ENCODE measurements at regions of chr16 and their contacts with region 1.

Region 1: GRCh38 chr16:8936421-8936820 is 27.3 kb downstream of the USP7 start:
- DNase-seq: peak; percentile 92
- H3K4me3 Mint-ChIP-seq: no peak overlapping the region
- H3K27ac Mint-ChIP-seq: peak overlapping the region; percentile 73
- H3K4me1 Mint-ChIP-seq: peaks cover 81% of the 10 kb centered on the region
- H3K27me3 Mint-ChIP-seq: no peaks in the 10 kb centered on the region

Region 2: GRCh38 chr16:8611886-8612600 is 324.4 kb before region 1 on chr16:
- CTCF ChIA-PET with region 1: no interaction called
- intact Hi-C with region 1: no loop called
- DNase-seq: no peak
- H3K4me3 Mint-ChIP-seq: no peak overlapping the region
- H3K27ac Mint-ChIP-seq: no peak overlapping the region
- H3K4me1 Mint-ChIP-seq: no peaks in the 10 kb centered on the region
- H3K27me3 Mint-ChIP-seq: peaks cover 11% of the 10 kb centered on the region

Region 3: GRCh38 chr16:8868416-8869211 is 67.8 kb before region 1 on chr16 and contains the start of gene CARHSP1:
- CTCF ChIA-PET with region 1: interaction called, 4 read pairs
- intact Hi-C with region 1: loop called (anchors 2 kb)
- DNase-seq: peak; percentile 81
- H3K4me3 Mint-ChIP-seq: peak within 1 kb of the TSS; percentile 89
- H3K27ac Mint-ChIP-seq: peak within 1 kb of the TSS; percentile 83
- H3K4me1 Mint-ChIP-seq: peaks cover 36% of the 10 kb centered on the region
- H3K27me3 Mint-ChIP-seq: no peaks in the 10 kb centered on the region
- total RNA-seq, gene CARHSP1: 46.5 to 49.6 TPM

Region 4: GRCh38 chr16:8910811-8911210 is 25.6 kb before region 1 on chr16:
- CTCF ChIA-PET with region 1: interaction called, 14 read pairs
- intact Hi-C with region 1: no loop called
- DNase-seq: no peak
- H3K4me3 Mint-ChIP-seq: no peak overlapping the region
- H3K27ac Mint-ChIP-seq: no peak overlapping the region
- H3K4me1 Mint-ChIP-seq: peaks cover 26% of the 10 kb centered on the region
- H3K27me3 Mint-ChIP-seq: no peaks in the 10 kb centered on the region

Region 5: DNA sequence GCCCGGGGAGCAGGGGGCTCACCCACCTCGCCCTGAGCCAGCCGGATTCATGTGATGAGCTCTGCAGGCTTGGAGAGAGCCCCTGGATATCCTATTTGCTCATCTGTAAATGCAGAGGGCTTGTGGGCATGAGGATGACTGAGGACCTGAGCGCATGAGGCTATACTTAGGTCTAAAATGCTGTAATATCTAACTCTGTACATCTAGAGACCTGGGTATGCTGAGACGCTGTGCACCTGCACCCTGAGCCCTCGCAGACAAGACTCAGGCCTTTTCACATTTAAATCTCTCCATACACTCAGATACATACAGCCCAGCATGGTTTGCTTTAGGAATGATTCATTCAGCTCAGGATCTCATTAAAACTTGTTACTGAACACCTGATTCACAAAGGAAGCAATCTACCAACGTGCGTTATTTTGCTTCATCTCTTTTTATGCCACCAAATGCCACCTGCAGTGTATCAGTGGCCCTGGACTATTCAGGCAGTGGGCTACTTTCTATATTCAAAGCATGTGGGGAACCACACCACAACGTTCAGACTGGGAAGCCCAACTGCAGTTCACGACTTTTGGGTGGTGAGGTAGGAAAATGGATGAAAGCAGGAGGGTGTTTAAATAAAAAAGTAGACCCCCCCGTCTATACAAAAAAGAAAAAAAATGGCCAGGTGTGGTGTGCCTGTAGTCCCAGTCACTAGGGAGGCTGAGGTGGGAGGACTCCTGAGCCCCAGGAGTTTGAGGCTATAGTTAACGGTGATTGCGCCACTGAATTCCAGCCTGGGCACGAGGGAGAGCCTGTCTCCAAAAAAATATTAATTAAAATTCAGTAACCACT is 15.2 kb after region 1 on chr16:
- CTCF ChIA-PET with region 1: interaction called, 14 read pairs
- intact Hi-C with region 1: no loop called
- DNase-seq: peak; percentile 10
- H3K4me3 Mint-ChIP-seq: no peak overlapping the region
- H3K27ac Mint-ChIP-seq: no peak overlapping the region
- H3K4me1 Mint-ChIP-seq: peaks cover 85% of the 10 kb centered on the region
- H3K27me3 Mint-ChIP-seq: no peaks in the 10 kb centered on the region

Region 6: DNA sequence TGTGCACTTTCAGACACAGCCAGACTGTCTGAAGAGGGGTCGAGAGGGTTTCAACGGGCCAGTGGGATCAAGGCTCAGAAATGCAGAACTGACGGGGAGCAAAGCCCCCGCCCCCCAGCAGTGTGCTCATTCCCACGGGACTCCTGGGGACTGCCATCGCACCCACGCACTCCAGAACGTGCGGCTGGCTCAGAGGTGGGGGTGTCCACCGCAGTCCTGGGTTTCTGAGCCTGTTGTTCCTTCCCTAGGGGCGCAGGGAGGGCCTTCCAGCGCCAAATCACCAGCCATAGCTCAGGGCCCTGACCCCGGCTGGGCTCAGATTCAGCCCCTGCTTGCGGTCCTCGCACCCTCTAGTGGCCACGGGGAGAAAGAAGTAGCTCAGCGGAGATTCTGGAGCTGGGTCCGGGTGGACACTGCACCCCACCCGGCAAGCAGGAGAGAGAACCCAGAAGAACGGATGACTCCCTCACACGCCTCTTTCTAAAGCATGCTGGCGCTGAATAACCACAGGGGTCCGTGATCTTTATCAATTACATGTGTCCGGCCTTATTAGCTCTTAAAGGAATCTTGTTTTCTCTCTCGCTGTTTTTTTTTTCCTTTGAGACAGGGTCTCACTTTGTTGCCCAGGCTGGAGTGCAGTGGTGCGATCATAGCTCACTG is 72.3 kb after region 1 on chr16:
- CTCF ChIA-PET with region 1: interaction called, 20 read pairs
- intact Hi-C with region 1: no loop called
- DNase-seq: peak; percentile 78
- H3K4me3 Mint-ChIP-seq: no peak overlapping the region
- H3K27ac Mint-ChIP-seq: no peak overlapping the region
- H3K4me1 Mint-ChIP-seq: peaks cover 4% of the 10 kb centered on the region
- H3K27me3 Mint-ChIP-seq: peaks cover 9% of the 10 kb centered on the region

Region 7: DNA sequence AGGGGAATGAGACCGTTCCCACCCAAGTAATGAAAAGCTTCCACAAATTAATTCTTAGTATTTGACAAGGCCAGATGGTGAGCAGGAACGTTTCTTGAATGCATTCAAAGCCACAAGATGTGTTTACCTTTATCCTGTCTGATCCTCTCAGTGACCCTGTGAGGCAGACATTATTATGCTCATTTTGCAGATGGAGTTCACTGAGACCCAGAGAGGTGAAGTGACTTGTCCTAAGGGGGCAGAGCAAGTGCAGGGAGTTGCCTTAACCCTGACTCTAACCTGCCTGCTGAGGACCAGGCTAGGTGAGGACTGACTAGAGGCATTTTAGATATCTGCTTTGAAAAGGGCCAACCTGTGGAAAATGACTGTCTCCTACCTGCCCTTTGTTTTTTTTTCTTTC is 311.7 kb after region 1 on chr16:
- CTCF ChIA-PET with region 1: no interaction called
- intact Hi-C with region 1: no loop called
- DNase-seq: no peak
- H3K4me3 Mint-ChIP-seq: no peak overlapping the region
- H3K27ac Mint-ChIP-seq: no peak overlapping the region
- H3K4me1 Mint-ChIP-seq: no peaks in the 10 kb centered on the region
- H3K27me3 Mint-ChIP-seq: peaks cover 7% of the 10 kb centered on the region